ENCODE measurements at regions of chr10 and their contacts with region 1.

Region 1: DNA sequence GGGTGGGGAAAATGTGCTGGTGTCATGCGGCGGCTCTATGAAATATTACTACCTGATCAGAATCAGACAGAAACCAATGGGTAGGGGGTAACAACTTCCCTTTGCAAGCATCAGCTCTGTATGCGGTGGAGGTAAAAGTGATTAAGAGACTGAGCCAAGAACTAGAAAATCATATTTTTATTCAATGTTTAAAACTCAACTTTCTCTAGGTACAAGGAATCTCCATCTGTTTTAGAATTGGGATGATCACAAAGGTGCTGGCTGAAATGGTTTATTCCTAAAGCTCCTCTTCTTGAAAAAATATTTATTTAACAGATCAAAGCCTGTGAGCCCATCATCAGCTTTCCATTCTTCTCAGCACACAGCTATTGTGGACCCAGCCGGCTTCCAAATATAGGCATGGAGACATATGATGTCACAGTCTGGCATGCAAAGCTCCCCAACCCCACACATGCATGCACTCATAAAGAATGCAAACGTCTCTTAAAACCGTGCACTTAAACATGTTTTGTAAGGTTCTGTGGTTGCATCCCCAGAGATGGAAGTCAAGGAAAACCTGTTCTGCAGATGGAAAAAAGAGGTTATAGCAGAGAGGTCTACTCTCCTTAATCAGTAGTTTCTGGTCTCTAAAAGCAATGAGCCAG is 126.0 kb downstream of the SKIDA1 start:
- DNase-seq: peak; percentile 85
- ATAC-seq: peak; percentile 40
- H3K4me3 ChIP-seq: no peak overlapping the region
- H3K27ac ChIP-seq: peak overlapping the region; percentile 87
- H3K4me1 ChIP-seq: peaks cover 32% of the 10 kb centered on the region
- H3K27me3 ChIP-seq: no peaks in the 10 kb centered on the region
- CTCF ChIP-seq: no peak

Region 2: DNA sequence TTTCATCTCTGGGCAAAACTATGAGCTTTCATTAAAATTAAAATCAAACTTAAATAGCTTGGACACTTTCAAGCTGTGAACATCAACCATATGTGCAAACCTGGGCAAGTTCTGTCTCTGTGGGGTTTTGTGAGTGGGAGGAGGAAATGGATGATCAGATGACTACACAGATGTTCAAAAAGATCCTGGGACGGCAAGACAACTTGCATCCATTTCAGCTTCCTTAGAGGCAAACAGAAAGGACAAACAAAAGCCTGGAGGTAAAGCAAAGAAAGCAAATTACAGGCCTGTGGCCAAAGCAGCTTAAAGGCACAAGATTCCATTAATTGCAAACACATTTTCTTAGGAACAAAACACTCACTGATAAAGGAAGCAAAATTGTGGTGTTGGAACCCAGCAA is 724.6 kb before region 1 on chr10:
- CTCF ChIA-PET with region 1: no interaction called
- POLR2A ChIA-PET with region 1: no interaction called
- intact Hi-C with region 1: no loop called
- DNase-seq: no peak
- ATAC-seq: no peak
- H3K4me3 ChIP-seq: no peak overlapping the region
- H3K27ac ChIP-seq: no peak overlapping the region
- H3K4me1 ChIP-seq: no peaks in the 10 kb centered on the region
- H3K27me3 ChIP-seq: peaks cover 46% of the 10 kb centered on the region
- CTCF ChIP-seq: no peak

Region 3: GRCh38 chr10:21336476-21337170 is 62.9 kb before region 1 on chr10:
- CTCF ChIA-PET with region 1: no interaction called
- POLR2A ChIA-PET with region 1: no interaction called
- intact Hi-C with region 1: loop called (anchors 1 kb)
- DNase-seq: peak; percentile 94
- ATAC-seq: peak; percentile 72
- H3K4me3 ChIP-seq: peak overlapping the region; percentile 47; the same call in 1 of the 2 replicates
- H3K27ac ChIP-seq: peak overlapping the region; percentile 86
- H3K4me1 ChIP-seq: peaks cover 48% of the 10 kb centered on the region
- H3K27me3 ChIP-seq: no peaks in the 10 kb centered on the region
- CTCF ChIP-seq: no peak

Measured in PC-3 (cell line).